Dendritic cell treated with granulocyte-macrophage colony-stimulating factor and Interleukin-4, amounts not matched to agents 40 ng/mL and 50 ng/mL, for 4 days (primary cell): ENCODE measurements at regions of chr4 and their contacts with region 1.

Region 1: DNA sequence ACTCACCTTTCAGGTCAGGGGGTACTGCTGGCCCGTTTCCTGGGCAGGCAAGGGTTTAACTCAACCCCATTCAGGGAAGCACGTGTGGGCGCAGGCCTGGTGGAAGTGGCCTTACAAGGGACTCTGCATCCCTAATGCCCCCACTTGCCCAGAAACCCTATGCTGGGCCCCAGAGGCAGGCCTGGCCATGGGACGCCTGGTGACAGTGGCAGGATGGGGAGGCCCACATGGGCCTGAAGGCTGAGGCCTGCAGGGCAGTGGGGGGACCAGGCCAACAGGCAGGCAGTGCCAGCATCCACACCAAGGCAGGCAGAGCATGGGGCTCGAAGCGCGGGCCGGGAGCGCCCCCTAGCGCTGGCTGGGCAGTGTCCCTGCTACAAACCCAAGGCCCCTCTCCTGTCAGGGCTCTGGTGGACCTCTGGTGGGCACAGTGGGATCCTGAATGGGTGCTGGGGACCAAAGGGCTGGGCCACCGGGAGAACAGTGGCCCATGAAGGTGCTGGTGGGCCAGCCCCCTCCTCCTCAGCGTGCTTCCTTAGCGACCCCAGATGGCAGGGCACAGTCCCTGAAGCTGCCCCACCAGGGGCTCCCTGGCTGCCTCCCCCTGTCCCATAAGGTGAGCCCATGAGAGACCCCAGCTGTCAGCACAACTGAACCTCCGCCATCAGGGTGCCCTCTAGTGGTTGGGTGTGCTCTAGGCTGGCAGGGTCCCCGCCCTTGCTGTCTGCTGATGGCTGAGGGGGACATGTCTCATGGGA is 16.8 kb downstream of the FGFR3 start:
- H3K4me3 Mint-ChIP-seq: no peak overlapping the region
- H3K27ac Mint-ChIP-seq: no peak overlapping the region
- H3K4me1 Mint-ChIP-seq: no peaks in the 10 kb centered on the region
- H3K27me3 Mint-ChIP-seq: no peaks in the 10 kb centered on the region

Region 2: DNA sequence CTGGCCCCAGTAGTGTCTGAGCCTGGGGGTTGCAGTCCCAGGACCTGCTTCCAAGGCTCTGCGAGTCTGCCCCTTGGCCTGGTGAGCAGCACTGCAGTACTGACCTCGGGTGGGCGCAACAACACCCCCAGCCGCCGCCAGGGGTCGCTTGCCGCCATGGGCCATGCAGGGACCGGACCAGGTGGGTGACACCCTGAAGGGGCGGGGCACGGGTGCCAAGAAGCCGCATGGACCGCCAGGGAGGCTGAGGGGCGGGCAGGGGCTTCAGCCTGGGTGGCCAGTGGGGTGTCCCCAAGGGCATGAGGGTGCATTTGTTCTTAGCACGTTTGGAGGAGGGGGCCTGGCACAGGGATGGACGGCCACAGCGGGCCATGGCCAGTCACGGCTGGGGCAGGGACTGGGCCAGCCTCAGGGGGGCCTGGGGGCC is 63.7 kb before region 1 on chr4:
- intact Hi-C with region 1: loop called (anchors 1 kb)
- H3K4me3 Mint-ChIP-seq: no peak overlapping the region
- H3K27ac Mint-ChIP-seq: no peak overlapping the region
- H3K4me1 Mint-ChIP-seq: peaks cover 6% of the 10 kb centered on the region
- H3K27me3 Mint-ChIP-seq: peaks cover 16% of the 10 kb centered on the region